ENCODE measurements at regions of chr1 and their contacts with region 1.

Region 1: GRCh38 chr1:27192039-27192529 is 37.2 kb upstream of the SLC9A1 start:
- DNase-seq: peak; percentile 41
- H3K4me3 ChIP-seq: no peak overlapping the region
- H3K27ac ChIP-seq: no peak overlapping the region
- H3K4me1 ChIP-seq: peaks cover 14% of the 10 kb centered on the region
- H3K27me3 ChIP-seq: no peaks in the 10 kb centered on the region
- CTCF ChIP-seq: no peak

Region 2: GRCh38 chr1:27102707-27103491 is 89.2 kb before region 1 on chr1:
- CTCF ChIA-PET with region 1: no interaction called
- dilution Hi-C with region 1: no loop called
- in situ Hi-C with region 1: loop called in 1 of 2 experiments (anchors 10 kb)
- intact Hi-C with region 1: no loop called
- DNase-seq: peak; percentile 45
- H3K4me3 ChIP-seq: no peak overlapping the region
- H3K27ac ChIP-seq: no peak overlapping the region
- H3K4me1 ChIP-seq: peaks cover 40% of the 10 kb centered on the region
- H3K27me3 ChIP-seq: no peaks in the 10 kb centered on the region
- CTCF ChIP-seq: peak; percentile 82 to 94

Region 3: GRCh38 chr1:27154991-27155781 is 36.9 kb before region 1 on chr1 and contains the start of gene SLC9A1:
- CTCF ChIA-PET with region 1: no interaction called
- dilution Hi-C with region 1: no loop called
- in situ Hi-C with region 1: no loop called
- intact Hi-C with region 1: loop called (anchors 1 kb)
- DNase-seq: peak; percentile 89
- H3K4me3 ChIP-seq: peak within 1 kb of the TSS; percentile 66 to 76 (median 69)
- H3K27ac ChIP-seq: peak within 1 kb of the TSS; percentile 89
- H3K4me1 ChIP-seq: peaks cover 37% of the 10 kb centered on the region
- H3K27me3 ChIP-seq: no peaks in the 10 kb centered on the region
- CTCF ChIP-seq: peak; percentile 72 to 91
- total RNA-seq, gene SLC9A1: 9.5 to 124 TPM

Region 4: GRCh38 chr1:27225621-27226020 is 33.5 kb after region 1 on chr1:
- CTCF ChIA-PET with region 1: no interaction called
- dilution Hi-C with region 1: loop called (anchors 5 kb)
- in situ Hi-C with region 1: no loop called
- intact Hi-C with region 1: no loop called
- DNase-seq: no peak
- H3K4me3 ChIP-seq: no peak overlapping the region
- H3K27ac ChIP-seq: no peak overlapping the region
- H3K4me1 ChIP-seq: no peaks in the 10 kb centered on the region
- H3K27me3 ChIP-seq: no peaks in the 10 kb centered on the region
- CTCF ChIP-seq: no peak

Region 5: DNA sequence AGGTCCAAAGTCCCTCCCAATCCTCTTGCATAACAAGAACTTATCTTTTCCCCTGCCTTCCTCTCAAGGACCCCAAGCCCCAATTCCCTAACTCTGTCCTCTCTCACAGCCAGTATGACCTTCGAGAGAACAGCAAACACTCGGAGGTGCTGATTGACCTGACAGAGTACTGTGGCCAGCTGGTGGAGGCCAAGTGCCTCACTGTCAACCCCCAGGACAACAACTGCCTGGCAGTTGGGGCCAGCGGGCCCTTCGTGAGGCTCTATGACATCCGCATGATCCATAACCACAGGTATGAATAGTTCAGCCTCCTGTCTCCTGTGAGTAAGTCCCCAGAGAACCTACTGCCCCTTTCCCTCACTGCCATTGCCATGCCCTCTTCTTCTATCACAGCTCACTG is 100.0 kb after region 1 on chr1:
- CTCF ChIA-PET with region 1: no interaction called
- dilution Hi-C with region 1: loop called (anchors 5 kb)
- in situ Hi-C with region 1: no loop called
- intact Hi-C with region 1: no loop called
- DNase-seq: peak; percentile 45
- H3K4me3 ChIP-seq: no peak overlapping the region
- H3K27ac ChIP-seq: no peak overlapping the region
- H3K4me1 ChIP-seq: peaks cover 6% of the 10 kb centered on the region
- H3K27me3 ChIP-seq: no peaks in the 10 kb centered on the region
- CTCF ChIP-seq: no peak

Region 6: GRCh38 chr1:27643701-27644625 is 451.9 kb after region 1 on chr1:
- CTCF ChIA-PET with region 1: no interaction called
- dilution Hi-C with region 1: no loop called
- in situ Hi-C with region 1: no loop called
- intact Hi-C with region 1: no loop called
- DNase-seq: peak; percentile 46
- H3K4me3 ChIP-seq: no peak overlapping the region
- H3K27ac ChIP-seq: no peak overlapping the region
- H3K4me1 ChIP-seq: no peaks in the 10 kb centered on the region
- H3K27me3 ChIP-seq: no peaks in the 10 kb centered on the region
- CTCF ChIP-seq: peak; percentile 72 to 79

Measured in mammary epithelial cell (primary cell).